ENCODE measurements at regions of chr10 and their contacts with region 1.

Region 1: DNA sequence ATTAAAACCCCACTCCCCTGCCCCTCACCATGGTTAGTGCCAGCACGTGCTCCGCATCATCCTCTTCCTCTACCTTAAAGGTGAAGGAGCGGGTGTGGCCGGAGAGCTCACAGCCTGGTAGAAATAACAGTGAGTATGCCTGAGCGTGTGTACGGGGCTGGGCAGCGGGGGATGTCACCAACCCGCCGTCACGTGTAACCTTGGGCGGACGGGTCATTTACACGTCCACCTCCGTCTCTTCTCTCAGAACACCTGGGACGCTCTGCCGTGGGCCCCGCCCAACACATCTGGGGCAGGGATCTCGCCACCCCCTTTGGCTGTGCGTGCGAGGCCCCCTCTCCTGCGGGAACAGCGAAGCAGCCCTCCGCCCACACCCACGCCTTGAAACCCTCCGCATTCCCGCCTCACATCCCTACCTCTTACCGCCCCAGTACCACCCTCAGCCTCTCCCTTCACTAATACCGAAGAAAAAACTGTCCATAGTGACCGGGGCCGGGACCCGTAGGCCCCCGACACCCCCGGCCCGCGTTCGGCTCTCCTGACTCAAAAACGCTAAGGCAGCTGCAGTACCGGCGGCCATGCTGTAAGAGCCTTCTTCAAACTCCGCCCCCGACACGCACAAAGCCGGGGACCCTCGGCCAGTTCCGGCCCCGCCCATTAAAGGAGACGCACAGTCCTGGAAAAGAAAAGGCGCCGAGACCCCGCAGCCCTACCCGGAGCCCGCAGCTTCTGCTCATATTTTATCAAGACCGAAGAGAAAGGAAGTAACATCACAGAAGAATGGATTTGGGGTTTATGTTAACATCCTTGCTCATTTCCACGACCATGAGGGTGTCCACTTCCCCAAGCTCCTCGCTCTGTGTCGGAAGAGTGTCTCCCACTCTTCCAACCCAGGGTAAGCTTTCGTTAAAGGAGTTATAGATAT is at the start of gene NPM3:
- DNase-seq: peak; percentile 63
- H3K4me3 ChIP-seq: peak within 1 kb of the TSS; percentile 81 to 91 (median 87)
- H3K27ac ChIP-seq: peak within 1 kb of the TSS; percentile 53
- H3K4me1 ChIP-seq: peaks cover 41% of the 10 kb centered on the region
- H3K27me3 ChIP-seq: no peaks in the 10 kb centered on the region
- CTCF ChIP-seq: no peak
- total RNA-seq, gene NPM3: 99.4 to 104 TPM

Region 2: DNA sequence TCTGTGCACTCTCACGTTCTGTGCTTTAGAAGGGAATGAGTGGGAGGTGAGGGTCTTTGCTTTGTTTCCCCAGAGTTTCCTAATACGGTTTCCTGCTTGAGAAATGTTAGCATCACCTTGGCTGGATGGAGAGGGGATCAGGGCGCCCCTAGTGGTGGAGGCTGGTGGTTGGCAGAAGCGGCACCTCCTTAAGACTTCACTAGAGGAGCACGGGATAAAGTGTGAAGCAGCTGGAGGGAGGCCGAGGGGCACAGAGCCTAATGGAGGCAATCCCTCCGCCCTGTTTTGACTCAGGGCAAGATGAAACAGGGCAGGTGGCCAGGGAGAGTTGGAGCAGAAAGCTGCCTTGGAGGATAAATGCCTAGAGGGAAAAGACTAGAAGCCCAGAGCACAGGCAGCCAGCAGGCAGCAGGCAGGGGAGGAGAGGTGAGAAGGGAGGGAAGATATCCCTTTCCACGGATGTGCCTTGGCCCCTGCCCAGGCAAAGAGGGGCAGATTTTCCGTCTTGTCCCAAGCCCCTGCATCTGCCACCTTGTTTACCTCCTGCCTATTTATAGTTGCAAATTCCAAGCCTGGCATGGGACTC is 485.1 kb before region 1 on chr10:
- CTCF ChIA-PET with region 1: no interaction called
- dilution Hi-C with region 1: no loop called
- in situ Hi-C with region 1: no loop called
- intact Hi-C with region 1: loop called (anchors 2 kb)
- DNase-seq: peak; percentile 37
- H3K4me3 ChIP-seq: no peak overlapping the region
- H3K27ac ChIP-seq: no peak overlapping the region
- H3K4me1 ChIP-seq: no peaks in the 10 kb centered on the region
- H3K27me3 ChIP-seq: no peaks in the 10 kb centered on the region
- CTCF ChIP-seq: peak; percentile 88 to 91

Region 3: GRCh38 chr10:101602761-101603398 is 180.2 kb before region 1 on chr10:
- CTCF ChIA-PET with region 1: interaction called, 25 read pairs
- dilution Hi-C with region 1: no loop called
- in situ Hi-C with region 1: loop called (anchors 5 to 10 kb)
- intact Hi-C with region 1: loop called (anchors 1 kb)
- DNase-seq: peak; percentile 62
- H3K4me3 ChIP-seq: no peak overlapping the region
- H3K27ac ChIP-seq: no peak overlapping the region
- H3K4me1 ChIP-seq: no peaks in the 10 kb centered on the region
- H3K27me3 ChIP-seq: no peaks in the 10 kb centered on the region
- CTCF ChIP-seq: peak; percentile 98

Region 4: DNA sequence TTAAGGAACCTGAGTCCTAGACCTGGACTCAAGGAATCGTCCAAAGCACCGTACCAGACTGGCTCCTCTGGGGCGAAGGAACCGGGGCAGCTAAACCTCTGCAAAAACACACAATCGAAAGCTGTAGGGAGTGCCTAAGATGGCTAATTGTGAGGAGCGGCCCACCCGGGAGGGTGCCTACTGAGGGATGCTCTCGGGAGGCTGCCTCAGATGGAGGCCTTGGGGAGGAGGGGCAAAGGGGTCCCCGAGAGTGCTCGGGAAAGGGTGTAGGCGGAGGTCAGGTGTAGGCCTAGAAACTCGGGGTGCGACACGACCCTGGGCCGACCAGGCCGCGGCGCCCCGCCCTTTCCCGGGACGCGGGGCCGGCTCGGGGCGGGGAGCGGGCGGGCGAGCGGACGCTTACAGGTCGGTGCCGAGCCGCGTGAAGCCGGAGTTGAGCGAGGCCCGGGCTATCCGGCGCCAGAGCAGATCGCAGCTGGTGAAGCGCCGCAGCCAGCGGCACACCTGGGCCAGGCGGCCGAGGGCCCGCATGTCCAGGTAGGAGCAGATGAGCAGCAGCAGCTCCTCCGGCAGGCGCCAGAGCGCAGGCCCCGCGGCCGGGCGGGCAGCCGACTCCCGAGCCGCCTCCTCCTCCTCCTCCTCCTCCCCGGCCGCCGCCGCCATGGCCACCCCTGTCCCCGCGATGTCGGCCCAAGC is 88.9 kb before region 1 on chr10:
- CTCF ChIA-PET with region 1: no interaction called
- dilution Hi-C with region 1: no loop called
- in situ Hi-C with region 1: no loop called
- intact Hi-C with region 1: loop called (anchors 2 kb)
- DNase-seq: peak; percentile 67
- H3K4me3 ChIP-seq: peak overlapping the region; percentile 77 to 99 (median 96)
- H3K27ac ChIP-seq: peak overlapping the region; percentile 92
- H3K4me1 ChIP-seq: peaks cover 15% of the 10 kb centered on the region
- H3K27me3 ChIP-seq: no peaks in the 10 kb centered on the region
- CTCF ChIP-seq: no peak

Region 5: DNA sequence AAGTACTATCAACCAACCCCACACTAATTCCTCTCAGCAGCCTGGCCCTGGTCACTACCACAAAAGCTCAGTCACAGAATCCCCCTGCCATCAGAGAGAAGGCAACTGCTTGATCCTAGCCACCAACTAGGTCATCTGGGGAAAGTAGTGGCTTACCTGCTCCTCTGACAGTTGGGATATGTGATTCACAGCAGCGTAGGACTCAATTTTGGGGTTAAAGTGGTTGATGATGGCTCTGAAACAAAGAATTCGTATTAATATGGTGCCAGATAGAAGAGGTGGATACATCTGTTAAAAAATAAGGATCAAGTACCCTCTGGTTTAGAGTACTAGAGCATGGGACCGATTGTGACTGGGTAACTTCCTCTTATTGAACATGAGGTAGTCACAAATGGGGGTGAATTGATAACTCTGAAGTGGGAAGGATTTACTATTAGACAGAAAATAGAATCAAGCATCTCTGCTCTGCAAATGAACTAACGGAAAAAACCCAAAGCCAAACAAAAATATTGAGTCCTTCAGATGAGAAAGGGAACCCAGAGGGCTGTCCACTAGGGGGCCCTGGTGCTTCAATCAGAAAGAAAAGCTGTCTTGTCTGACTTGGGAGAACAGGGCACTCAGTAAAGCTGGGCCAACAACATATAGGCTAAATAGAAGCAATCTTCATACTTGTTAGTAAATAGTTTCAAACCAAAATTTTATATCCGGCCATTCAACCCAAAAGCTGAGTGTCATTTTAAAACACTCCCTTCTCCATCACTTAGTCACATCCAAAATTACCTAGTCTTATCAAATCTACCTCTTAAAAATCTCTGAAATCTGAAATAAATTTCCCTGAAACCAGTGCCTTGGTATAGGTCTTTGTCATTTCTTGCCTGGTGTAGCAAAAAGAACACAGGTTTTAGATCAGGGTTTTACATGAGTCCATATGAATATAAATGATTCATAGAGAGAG is 106.5 kb after region 1 on chr10:
- CTCF ChIA-PET with region 1: no interaction called
- dilution Hi-C with region 1: no loop called
- in situ Hi-C with region 1: no loop called
- intact Hi-C with region 1: loop called (anchors 5 kb)
- DNase-seq: peak; percentile 40
- H3K4me3 ChIP-seq: no peak overlapping the region
- H3K27ac ChIP-seq: no peak overlapping the region
- H3K4me1 ChIP-seq: no peaks in the 10 kb centered on the region
- H3K27me3 ChIP-seq: no peaks in the 10 kb centered on the region
- CTCF ChIP-seq: peak; percentile 89 to 91

Region 6: GRCh38 chr10:102072673-102073527 is 289.8 kb after region 1 on chr10:
- CTCF ChIA-PET with region 1: no interaction called
- dilution Hi-C with region 1: no loop called
- in situ Hi-C with region 1: no loop called
- intact Hi-C with region 1: loop called (anchors 1 kb)
- DNase-seq: peak; percentile 52
- H3K4me3 ChIP-seq: no peak overlapping the region
- H3K27ac ChIP-seq: no peak overlapping the region
- H3K4me1 ChIP-seq: no peaks in the 10 kb centered on the region
- H3K27me3 ChIP-seq: no peaks in the 10 kb centered on the region
- CTCF ChIP-seq: peak; percentile 95 to 99